Ascending aorta (tissue), 2 donors: ENCODE measurements at regions of chr17 and their contacts with region 1.

Region 1: DNA sequence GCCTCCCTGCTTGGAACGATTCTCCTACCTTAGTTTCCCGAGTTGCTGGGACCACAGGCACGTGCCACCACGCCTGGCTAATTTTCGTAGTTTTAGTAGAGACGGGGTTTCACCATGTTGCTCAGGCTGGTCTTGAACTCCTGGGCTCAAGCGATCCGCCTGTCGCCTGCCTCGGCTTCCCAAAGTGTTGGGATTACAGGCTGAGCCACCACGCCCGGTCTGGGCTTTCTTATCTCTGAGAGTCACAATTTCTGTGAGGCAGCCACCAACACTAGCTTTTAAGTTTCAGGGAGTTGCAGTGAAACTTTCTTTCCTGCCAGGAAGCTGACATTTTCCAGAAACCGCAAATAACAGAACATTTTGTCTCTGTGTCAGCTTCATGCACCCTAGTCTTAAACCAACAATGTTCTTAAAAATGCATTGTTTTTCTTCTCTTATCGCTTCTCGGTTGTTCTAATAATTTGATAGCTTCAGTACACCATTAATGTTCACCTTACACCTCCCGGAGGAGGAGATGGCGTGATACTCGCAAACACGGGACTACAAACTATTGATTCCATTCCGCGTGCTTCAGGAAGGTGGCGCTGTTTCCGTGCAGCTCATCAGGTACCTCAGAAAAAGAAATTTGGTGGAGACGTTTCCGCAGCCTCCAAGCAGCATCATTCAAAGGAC is 7.4 kb upstream of the DHRS7B start:
- DNase-seq: peak; percentile 16 to 90
- H3K4me3 ChIP-seq: peak overlapping the region; percentile 10 to 30
- H3K27ac ChIP-seq: peak overlapping the region; percentile 44 to 57
- H3K4me1 ChIP-seq: peaks cover 0 to 6% of the 10 kb centered on the region in 2 donors
- H3K27me3 ChIP-seq: no peaks in the 10 kb centered on the region
- CTCF ChIP-seq: peak; percentile 73 to 86 (median 86)

Region 2: GRCh38 chr17:21511363-21512198 is 392.2 kb after region 1 on chr17:
- intact Hi-C with region 1: loop called (anchors 1 kb)
- DNase-seq: peak; percentile 21 to 91
- H3K4me3 ChIP-seq: peak overlapping the region; percentile 70 to 74
- H3K27ac ChIP-seq: peak overlapping the region; percentile 45 to 49
- H3K4me1 ChIP-seq: peaks cover 0 to 7% of the 10 kb centered on the region in 2 donors
- H3K27me3 ChIP-seq: no peaks in the 10 kb centered on the region
- CTCF ChIP-seq: peak; percentile 35 to 81 (median 80)